IMR-90 (cell line): ENCODE measurements at regions of chr5 and their contacts with region 1.

Region 1: DNA sequence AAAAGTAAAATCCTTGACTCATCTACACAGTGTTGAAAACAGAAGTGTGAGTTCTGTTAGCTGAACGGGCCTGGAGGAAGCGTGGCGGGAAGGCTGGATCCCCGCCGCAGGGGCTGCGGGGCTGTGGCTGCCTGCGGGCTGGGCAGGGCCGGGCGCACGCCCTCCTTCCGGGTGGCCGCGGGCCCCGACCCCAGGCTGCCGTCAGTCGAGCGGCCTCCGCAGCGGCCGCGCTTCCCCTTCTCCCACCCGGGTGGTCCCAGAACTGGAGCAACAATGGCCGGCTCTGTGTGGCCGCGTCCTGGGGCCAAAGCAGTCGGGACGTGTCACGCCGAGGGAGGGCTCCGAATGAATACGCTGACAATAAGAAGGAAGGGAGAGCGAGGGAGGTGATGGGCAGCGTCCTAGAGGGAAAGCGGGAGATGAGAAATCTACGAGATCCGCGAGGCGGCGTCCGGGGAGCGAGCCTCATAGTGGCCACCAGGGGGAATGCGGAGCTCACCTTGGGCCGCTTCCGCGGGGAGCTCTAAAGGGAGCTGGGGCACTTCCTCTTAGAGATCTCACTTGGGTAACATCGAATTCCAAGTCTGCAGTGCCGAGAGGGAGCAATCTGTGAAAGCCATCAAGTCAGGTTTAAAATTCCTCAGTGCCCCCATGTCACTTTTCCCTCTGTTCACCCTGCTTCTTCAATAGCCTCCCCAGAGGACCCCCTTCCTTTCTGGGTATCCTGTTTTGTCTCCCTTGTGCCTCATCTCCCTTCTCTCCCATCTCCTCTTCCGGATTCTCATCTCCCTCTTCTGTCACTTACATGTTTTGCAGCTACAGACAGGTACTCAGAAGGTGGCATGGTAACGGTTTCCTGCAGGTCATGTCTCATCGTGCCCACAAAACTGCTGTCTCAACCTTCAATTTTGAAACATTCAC is 83.9 kb downstream of the SLC1A3 start:
- DNase-seq: peak; percentile 61
- ATAC-seq: peak; percentile 91
- H3K4me3 ChIP-seq: peak overlapping the region; percentile 64
- H3K27ac ChIP-seq: no peak overlapping the region
- H3K4me1 ChIP-seq: peaks cover 2% of the 10 kb centered on the region; the same call in 1 of the 2 replicates
- H3K27me3 ChIP-seq: no peaks in the 10 kb centered on the region; the same call in 1 of the 2 replicates
- CTCF ChIP-seq: peak; percentile 79
- POLR2A ChIP-seq: no peak
- RAD21 ChIP-seq: peak; percentile 49

Region 2: DNA sequence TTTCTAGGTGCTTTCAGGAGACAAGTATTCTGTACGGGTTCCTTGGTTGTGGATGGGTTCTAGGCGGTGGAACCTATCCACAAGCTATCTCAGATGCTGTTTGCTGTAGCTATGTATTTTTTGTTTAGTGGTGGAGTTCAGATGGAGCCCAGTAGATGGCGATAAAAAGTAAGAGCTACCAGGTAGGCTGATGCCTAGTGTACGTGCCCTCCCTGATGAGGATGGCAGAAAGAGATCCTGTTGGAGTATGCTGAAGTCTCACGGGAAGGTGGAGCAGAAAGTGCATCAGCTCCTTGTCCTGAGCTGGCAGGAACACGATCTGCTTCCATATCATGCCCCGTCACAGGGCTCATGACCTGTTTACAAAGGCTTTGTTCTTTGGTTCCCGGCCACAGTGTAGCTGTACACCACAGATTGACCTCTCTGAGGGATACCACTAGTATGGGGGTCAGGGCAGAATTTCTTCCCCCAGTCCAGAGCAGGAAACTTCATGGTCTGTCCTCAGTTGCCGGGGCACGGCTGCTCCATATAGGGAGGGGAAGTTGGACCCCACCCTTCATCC is 611.0 kb before region 1 on chr5:
- CTCF ChIA-PET with region 1: interaction called, 4 read pairs
- POLR2A ChIA-PET with region 1: no interaction called
- dilution Hi-C with region 1: no loop called
- in situ Hi-C with region 1: no loop called
- intact Hi-C with region 1: loop called (anchors 10 kb)
- DNase-seq: peak; percentile 44
- ATAC-seq: peak; percentile 97
- H3K4me3 ChIP-seq: no peak overlapping the region
- H3K27ac ChIP-seq: no peak overlapping the region
- H3K4me1 ChIP-seq: no peaks in the 10 kb centered on the region
- H3K27me3 ChIP-seq: peaks cover 5% of the 10 kb centered on the region
- CTCF ChIP-seq: peak; percentile 60
- POLR2A ChIP-seq: no peak
- RAD21 ChIP-seq: peak; percentile 61

Region 3: GRCh38 chr5:36177715-36178523 is 512.4 kb before region 1 on chr5:
- CTCF ChIA-PET with region 1: interaction called, 3 read pairs
- POLR2A ChIA-PET with region 1: no interaction called
- dilution Hi-C with region 1: no loop called
- in situ Hi-C with region 1: no loop called
- intact Hi-C with region 1: loop called (anchors 10 kb)
- DNase-seq: peak; percentile 65
- ATAC-seq: peak; percentile 77
- H3K4me3 ChIP-seq: no peak overlapping the region
- H3K27ac ChIP-seq: no peak overlapping the region
- H3K4me1 ChIP-seq: 0 out of 2 replicates have a peak, but pooled peaks cover 5% of the 10 kb centered on the region
- H3K27me3 ChIP-seq: no peaks in the 10 kb centered on the region
- CTCF ChIP-seq: peak; percentile 63
- POLR2A ChIP-seq: no peak
- RAD21 ChIP-seq: peak; percentile 63

Region 4: DNA sequence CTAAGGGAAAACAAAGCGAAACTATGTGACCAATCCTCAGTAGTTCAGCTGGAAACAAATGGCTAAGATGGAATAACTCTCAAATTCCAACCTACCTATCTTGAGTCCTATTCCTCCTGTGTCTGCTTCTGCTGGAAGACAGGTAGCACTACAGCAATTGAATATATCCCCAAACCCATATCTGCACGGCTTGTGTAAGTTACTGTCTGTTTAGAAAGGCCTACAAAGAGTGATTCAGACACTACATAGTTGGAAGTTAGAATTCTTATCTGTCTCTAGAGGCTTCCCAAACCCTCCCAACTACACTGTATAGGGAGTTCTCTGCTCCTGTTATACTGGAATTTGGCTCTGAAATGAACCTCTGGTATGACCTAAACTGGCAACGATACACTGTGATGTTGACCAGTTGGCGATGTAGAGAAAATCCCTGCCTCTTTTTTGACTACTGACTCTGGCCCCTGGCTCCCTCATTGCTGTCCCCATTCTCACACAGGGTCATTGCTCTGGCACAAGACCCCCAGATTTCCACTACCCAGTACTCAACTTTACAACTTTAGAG is 426.0 kb before region 1 on chr5:
- CTCF ChIA-PET with region 1: no interaction called
- POLR2A ChIA-PET with region 1: no interaction called
- dilution Hi-C with region 1: no loop called
- in situ Hi-C with region 1: loop called (anchors 10 kb)
- intact Hi-C with region 1: loop called (anchors 5 kb)
- DNase-seq: no peak
- ATAC-seq: no peak
- H3K4me3 ChIP-seq: no peak overlapping the region
- H3K27ac ChIP-seq: no peak overlapping the region
- H3K4me1 ChIP-seq: no peaks in the 10 kb centered on the region
- H3K27me3 ChIP-seq: peaks cover 1% of the 10 kb centered on the region; the same call in 1 of the 2 replicates
- CTCF ChIP-seq: no peak
- POLR2A ChIP-seq: no peak
- RAD21 ChIP-seq: no peak

Region 5: DNA sequence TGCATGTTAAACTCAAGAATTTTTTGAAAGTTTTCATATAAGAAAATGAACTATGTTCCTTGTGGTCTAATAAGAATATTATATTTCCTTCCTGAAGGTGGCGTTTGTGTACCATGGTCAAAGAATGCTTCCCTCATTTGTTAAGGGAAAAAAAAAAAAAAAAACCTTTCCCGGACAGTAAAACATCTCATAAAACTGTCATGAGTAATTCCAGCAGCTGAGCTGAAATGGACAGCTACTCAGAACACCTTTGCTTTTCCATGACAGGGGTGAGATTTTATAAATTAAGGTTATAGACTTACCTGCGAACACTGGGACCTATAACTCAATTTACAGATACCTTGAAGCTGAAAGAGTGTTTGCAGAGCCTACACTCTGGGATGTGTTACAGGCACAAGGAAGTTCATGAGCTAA is 275.4 kb before region 1 on chr5:
- CTCF ChIA-PET with region 1: interaction called, 8 read pairs
- POLR2A ChIA-PET with region 1: no interaction called
- dilution Hi-C with region 1: no loop called
- in situ Hi-C with region 1: loop called (anchors 5 kb)
- intact Hi-C with region 1: loop called (anchors 1 kb)
- DNase-seq: peak; percentile 54
- ATAC-seq: peak; percentile 72
- H3K4me3 ChIP-seq: no peak overlapping the region
- H3K27ac ChIP-seq: no peak overlapping the region
- H3K4me1 ChIP-seq: no peaks in the 10 kb centered on the region
- H3K27me3 ChIP-seq: peaks cover 13% of the 10 kb centered on the region
- CTCF ChIP-seq: peak; percentile 67
- POLR2A ChIP-seq: no peak
- RAD21 ChIP-seq: peak; percentile 78

Region 6: GRCh38 chr5:36435516-36435915 is 254.8 kb before region 1 on chr5:
- CTCF ChIA-PET with region 1: no interaction called
- POLR2A ChIA-PET with region 1: no interaction called
- dilution Hi-C with region 1: no loop called
- in situ Hi-C with region 1: no loop called
- intact Hi-C with region 1: no loop called
- DNase-seq: no peak
- ATAC-seq: no peak
- H3K4me3 ChIP-seq: no peak overlapping the region
- H3K27ac ChIP-seq: no peak overlapping the region
- H3K4me1 ChIP-seq: no peaks in the 10 kb centered on the region
- H3K27me3 ChIP-seq: peaks cover 6% of the 10 kb centered on the region
- CTCF ChIP-seq: no peak
- POLR2A ChIP-seq: no peak
- RAD21 ChIP-seq: no peak

Region 7: GRCh38 chr5:36507332-36507952 is 182.9 kb before region 1 on chr5:
- CTCF ChIA-PET with region 1: interaction called, 5 read pairs
- POLR2A ChIA-PET with region 1: no interaction called
- dilution Hi-C with region 1: no loop called
- in situ Hi-C with region 1: loop called (anchors 10 kb)
- intact Hi-C with region 1: loop called (anchors 2 kb)
- DNase-seq: peak; percentile 57
- ATAC-seq: peak; percentile 68; the same call in 1 of the 2 replicates
- H3K4me3 ChIP-seq: no peak overlapping the region
- H3K27ac ChIP-seq: no peak overlapping the region
- H3K4me1 ChIP-seq: peaks cover 3% of the 10 kb centered on the region; the same call in 1 of the 2 replicates
- H3K27me3 ChIP-seq: peaks cover 5% of the 10 kb centered on the region; the same call in 1 of the 2 replicates
- CTCF ChIP-seq: peak; percentile 78
- POLR2A ChIP-seq: no peak
- RAD21 ChIP-seq: peak; percentile 64

Region 8: GRCh38 chr5:36606428-36607113 is 83.7 kb before region 1 on chr5 and contains the start of gene SLC1A3:
- CTCF ChIA-PET with region 1: interaction called, 5 read pairs
- POLR2A ChIA-PET with region 1: no interaction called
- dilution Hi-C with region 1: no loop called
- in situ Hi-C with region 1: no loop called
- intact Hi-C with region 1: loop called (anchors 5 kb)
- DNase-seq: peak; percentile 68
- ATAC-seq: peak; percentile 96
- H3K4me3 ChIP-seq: peak within 1 kb of the TSS; percentile 47
- H3K27ac ChIP-seq: no peak within 1 kb of the TSS
- H3K4me1 ChIP-seq: no peaks in the 10 kb centered on the region
- H3K27me3 ChIP-seq: no peaks in the 10 kb centered on the region; the same call in 1 of the 2 replicates
- CTCF ChIP-seq: no peak
- POLR2A ChIP-seq: no peak
- RAD21 ChIP-seq: no peak
- total RNA-seq, gene SLC1A3: 0.56 and 1.3 TPM in 2 replicates